ENCODE measurements at regions of chr12 and their contacts with region 1.

Region 1: GRCh38 chr12:124906606-124907261 is 7.7 kb downstream of the UBC start:
- DNase-seq: peak; percentile 67 to 94 (median 76)
- ATAC-seq: peak; percentile 59
- H3K4me3 ChIP-seq: no peak overlapping the region
- H3K27ac ChIP-seq: 0 out of 3 replicates have a peak overlapping the region, but pooled peaks have one; percentile 3
- H3K4me1 ChIP-seq: peaks cover 14 to 26% of the 10 kb centered on the region in 2 experiments; a peak in 4 of 5 replicates
- H3K27me3 ChIP-seq: no peaks in the 10 kb centered on the region
- CTCF ChIP-seq: peak; percentile 98 to 100 (median 100)
- EP300 ChIP-seq: no peak; the same call in 1 of the 2 replicates
- POLR2A ChIP-seq: no peak
- RAD21 ChIP-seq: peak; percentile 96 to 98

Region 2: GRCh38 chr12:124774462-124775167 is 132.1 kb before region 1 on chr12:
- CTCF ChIA-PET with region 1: interaction called, 3 read pairs
- POLR2A ChIA-PET with region 1: interaction called, 4 read pairs
- in situ Hi-C with region 1: no loop called
- intact Hi-C with region 1: loop called (anchors 2 kb)
- DNase-seq: peak in 1 of 4 experiments; percentile 57
- ATAC-seq: peak; percentile 35
- H3K4me3 ChIP-seq: no peak overlapping the region
- H3K27ac ChIP-seq: no peak overlapping the region
- H3K4me1 ChIP-seq: peaks cover 14 to 42% of the 10 kb centered on the region in 2 experiments
- H3K27me3 ChIP-seq: peaks cover 0 to 10% of the 10 kb centered on the region in 2 experiments; a peak in 1 of 5 replicates
- CTCF ChIP-seq: peak; percentile 13 to 24 (median 23); a peak in 3 of 6 replicates
- EP300 ChIP-seq: peak; percentile 25; the same call in 1 of the 2 replicates
- POLR2A ChIP-seq: no peak
- RAD21 ChIP-seq: no peak

Region 3: GRCh38 chr12:124863416-124864325 is 43.1 kb before region 1 on chr12 and contains the start of gene SCARB1:
- CTCF ChIA-PET with region 1: no interaction called
- POLR2A ChIA-PET with region 1: interaction called, 10 read pairs
- in situ Hi-C with region 1: no loop called
- intact Hi-C with region 1: loop called (anchors 2 kb)
- DNase-seq: peak; percentile 86 to 99 (median 98)
- ATAC-seq: peak; percentile 84
- H3K4me3 ChIP-seq: peak within 1 kb of the TSS; percentile 80
- H3K27ac ChIP-seq: peak within 1 kb of the TSS; percentile 94
- H3K4me1 ChIP-seq: peaks cover 48 to 50% of the 10 kb centered on the region in 2 experiments
- H3K27me3 ChIP-seq: no peaks in the 10 kb centered on the region
- CTCF ChIP-seq: no peak; a peak in 1 of 6 replicates
- EP300 ChIP-seq: no peak
- POLR2A ChIP-seq: peak; percentile 85
- RAD21 ChIP-seq: peak in 1 of 2 experiments; percentile 23; a peak in 2 of 4 replicates
- polyA plus RNA-seq, gene SCARB1: 0.56 to 4.7 TPM

Region 4: GRCh38 chr12:124884587-124885438 is 21.9 kb before region 1 on chr12:
- CTCF ChIA-PET with region 1: no interaction called
- POLR2A ChIA-PET with region 1: interaction called, 22 read pairs
- in situ Hi-C with region 1: no loop called
- intact Hi-C with region 1: loop called (anchors 2 kb)
- DNase-seq: peak; percentile 77 to 98 (median 82)
- ATAC-seq: peak; percentile 87
- H3K4me3 ChIP-seq: no peak overlapping the region
- H3K27ac ChIP-seq: peak overlapping the region; percentile 57; the same call in 2 of the 3 replicates
- H3K4me1 ChIP-seq: peaks cover 36 to 55% of the 10 kb centered on the region in 2 experiments
- H3K27me3 ChIP-seq: no peaks in the 10 kb centered on the region
- CTCF ChIP-seq: peak in 2 of 3 experiments; percentile 25 to 28; a peak in 2 of 6 replicates
- EP300 ChIP-seq: peak; percentile 85
- POLR2A ChIP-seq: no peak
- RAD21 ChIP-seq: no peak

Region 5: DNA sequence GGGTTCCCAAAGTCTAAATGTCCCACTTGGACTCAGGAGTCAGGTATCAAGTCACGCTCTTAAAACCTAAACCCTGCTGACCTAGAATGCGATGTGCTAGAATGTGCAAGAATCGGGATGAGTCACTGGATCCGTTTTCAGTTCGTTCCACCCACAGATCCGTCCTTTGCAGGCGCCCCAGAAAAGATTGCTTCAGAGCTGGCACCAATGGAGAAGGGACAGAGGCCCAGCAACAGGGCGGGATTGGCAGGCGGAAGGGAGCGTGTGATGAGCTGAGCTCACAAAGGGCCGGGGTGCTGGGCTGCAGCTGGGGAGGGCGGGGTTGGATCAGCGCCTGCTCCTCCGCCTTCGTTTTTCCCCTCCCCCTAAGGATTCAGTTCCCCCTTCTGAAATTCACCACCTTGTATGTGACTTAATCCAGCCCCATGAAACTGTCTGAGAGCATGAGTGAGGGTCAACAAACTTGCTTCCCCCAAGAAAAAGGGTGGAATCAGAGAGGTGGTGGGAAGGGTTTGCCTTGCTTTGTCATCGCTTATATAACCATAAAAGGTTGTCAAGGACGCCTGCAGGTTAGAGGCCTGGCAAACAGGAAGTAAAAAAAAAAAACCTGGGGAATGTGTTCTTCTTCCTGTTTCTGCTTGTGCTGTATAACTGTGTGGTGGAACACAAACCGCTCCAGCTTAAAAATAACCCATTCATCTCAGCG is 10.6 kb after region 1 on chr12:
- CTCF ChIA-PET with region 1: no interaction called
- POLR2A ChIA-PET with region 1: interaction called, 39 read pairs
- in situ Hi-C with region 1: no loop called
- intact Hi-C with region 1: no loop called
- DNase-seq: peak; percentile 77 to 98 (median 82)
- ATAC-seq: peak; percentile 86
- H3K4me3 ChIP-seq: peak overlapping the region; percentile 94
- H3K27ac ChIP-seq: peak overlapping the region; percentile 100
- H3K4me1 ChIP-seq: peaks cover 27 to 50% of the 10 kb centered on the region in 2 experiments
- H3K27me3 ChIP-seq: no peaks in the 10 kb centered on the region
- CTCF ChIP-seq: no peak
- EP300 ChIP-seq: peak; percentile 85
- POLR2A ChIP-seq: peak; percentile 80; the same call in 1 of the 2 replicates
- RAD21 ChIP-seq: 0 out of 4 replicates have a peak, but pooled peaks of 1 of the 2 experiments have one; percentile 20

Region 6: GRCh38 chr12:124940549-124941527 is 34.1 kb after region 1 on chr12:
- CTCF ChIA-PET with region 1: interaction called, 46 read pairs
- POLR2A ChIA-PET with region 1: interaction called, 127 read pairs
- in situ Hi-C with region 1: no loop called
- intact Hi-C with region 1: loop called (anchors 2 kb)
- DNase-seq: peak; percentile 82 to 97 (median 86)
- ATAC-seq: peak; percentile 84
- H3K4me3 ChIP-seq: peak overlapping the region; percentile 54
- H3K27ac ChIP-seq: peak overlapping the region; percentile 87
- H3K4me1 ChIP-seq: peaks cover 9 to 12% of the 10 kb centered on the region in 2 experiments; a peak in 3 of 5 replicates
- H3K27me3 ChIP-seq: no peaks in the 10 kb centered on the region
- CTCF ChIP-seq: peak; percentile 98 to 99 (median 98)
- EP300 ChIP-seq: peak; percentile 56
- POLR2A ChIP-seq: peak; percentile 69
- RAD21 ChIP-seq: peak; percentile 47 to 61

Measured in K562 (cell line).